Activated CD8-positive, alpha-beta T cell treated with anti-CD3 and anti-CD28 coated beads for 36 hours (primary cell): ENCODE measurements at regions of chr2 and their contacts with region 1.

Region 1: GRCh38 chr2:64750817-64751285 is 97.1 kb upstream of the SERTAD2 start:
- DNase-seq: peak; percentile 99
- ATAC-seq: peak; percentile 86
- H3K4me3 Mint-ChIP-seq: peak overlapping the region; percentile 93
- H3K27ac Mint-ChIP-seq: peak overlapping the region; percentile 97
- H3K4me1 Mint-ChIP-seq: peaks cover 29% of the 10 kb centered on the region
- H3K27me3 Mint-ChIP-seq: no peaks in the 10 kb centered on the region
- CTCF ChIP-seq: no peak

Region 2: GRCh38 chr2:64730551-64731262 is 20.1 kb before region 1 on chr2:
- CTCF ChIA-PET with region 1: interaction called, 10 read pairs
- POLR2A ChIA-PET with region 1: interaction called, 6 read pairs
- intact Hi-C with region 1: no loop called
- DNase-seq: peak; percentile 58
- ATAC-seq: peak; percentile 51
- H3K4me3 Mint-ChIP-seq: peak overlapping the region; percentile 83
- H3K27ac Mint-ChIP-seq: peak overlapping the region; percentile 96
- H3K4me1 Mint-ChIP-seq: peaks cover 67% of the 10 kb centered on the region
- H3K27me3 Mint-ChIP-seq: no peaks in the 10 kb centered on the region
- CTCF ChIP-seq: no peak

Region 3: GRCh38 chr2:64767670-64768468 is 17.0 kb after region 1 on chr2:
- CTCF ChIA-PET with region 1: interaction called, 25 read pairs
- POLR2A ChIA-PET with region 1: interaction called, 3 read pairs
- intact Hi-C with region 1: no loop called
- DNase-seq: peak; percentile 90
- ATAC-seq: peak; percentile 84
- H3K4me3 Mint-ChIP-seq: peak overlapping the region; percentile 81
- H3K27ac Mint-ChIP-seq: peak overlapping the region; percentile 94
- H3K4me1 Mint-ChIP-seq: peaks cover 33% of the 10 kb centered on the region
- H3K27me3 Mint-ChIP-seq: no peaks in the 10 kb centered on the region
- CTCF ChIP-seq: no peak

Region 4: GRCh38 chr2:64998658-64999061 is 247.8 kb after region 1 on chr2:
- CTCF ChIA-PET with region 1: no interaction called
- POLR2A ChIA-PET with region 1: no interaction called
- intact Hi-C with region 1: no loop called
- DNase-seq: no peak
- ATAC-seq: no peak
- H3K4me3 Mint-ChIP-seq: no peak overlapping the region
- H3K27ac Mint-ChIP-seq: no peak overlapping the region
- H3K4me1 Mint-ChIP-seq: peaks cover 2% of the 10 kb centered on the region
- H3K27me3 Mint-ChIP-seq: no peaks in the 10 kb centered on the region
- CTCF ChIP-seq: no peak